ENCODE measurements at regions of chr3 and their contacts with region 1.

Region 1: GRCh38 chr3:52001443-52001974 is 5.8 kb upstream of the RPL29 start:
- DNase-seq: peak; percentile 79
- H3K4me3 ChIP-seq: no peak overlapping the region
- H3K27ac ChIP-seq: no peak overlapping the region
- H3K4me1 ChIP-seq: peaks cover 0 to 15% (median 6%) of the 10 kb centered on the region in 4 donors
- H3K27me3 ChIP-seq: peaks cover 4% of the 10 kb centered on the region
- CTCF ChIP-seq: peak; percentile 87 to 96 (median 90)
- EP300 ChIP-seq: no peak
- POLR2A ChIP-seq: no peak

Region 2: DNA sequence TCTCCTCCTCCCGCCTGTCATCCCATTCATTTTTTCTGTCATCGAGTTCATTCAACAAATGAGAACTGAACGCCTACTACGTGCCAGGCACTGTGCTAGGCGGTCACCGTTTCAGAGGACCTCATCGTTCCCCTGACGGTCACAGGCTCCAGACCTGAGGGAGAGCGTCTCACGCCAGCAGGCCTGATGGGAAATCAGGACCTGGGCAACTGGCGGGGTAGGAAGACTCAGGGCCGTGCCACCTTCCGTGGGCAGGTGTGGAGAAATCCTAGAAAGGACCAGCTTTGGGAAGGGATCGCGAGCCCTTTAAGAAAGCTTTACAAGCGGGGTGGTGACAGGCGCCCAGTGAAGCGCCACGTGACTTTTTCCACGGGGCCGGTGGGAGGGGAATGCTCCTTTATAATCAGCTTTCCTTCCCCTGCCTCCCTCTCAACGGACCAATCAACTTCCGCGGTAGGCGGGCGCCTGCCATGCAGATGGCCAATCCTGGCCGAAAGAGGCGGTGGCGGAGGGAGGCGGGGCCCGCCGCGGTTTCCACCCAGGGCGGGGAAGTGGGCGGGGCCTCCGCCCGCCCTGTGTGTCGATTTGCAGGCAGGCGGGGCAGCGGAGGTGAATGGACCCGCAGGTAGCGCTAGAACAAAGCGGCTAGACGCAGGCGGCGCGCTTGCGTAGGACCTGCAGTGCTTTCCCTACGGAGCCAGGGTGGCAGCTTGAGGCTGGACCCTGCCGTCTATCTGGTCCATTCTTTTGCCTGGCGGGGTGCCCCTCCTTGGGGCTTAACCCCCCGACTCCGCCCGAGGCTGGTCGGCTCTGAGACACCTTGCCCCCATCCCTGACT is 55.7 kb after region 1 on chr3:
- in situ Hi-C with region 1: loop called in 1 of 4 experiments (anchors 10 kb)
- intact Hi-C with region 1: loop called (anchors 10 kb)
- DNase-seq: peak; percentile 100
- H3K4me3 ChIP-seq: peak overlapping the region; percentile 54 to 80 (median 76)
- H3K27ac ChIP-seq: peak overlapping the region; percentile 88 to 96 (median 92)
- H3K4me1 ChIP-seq: peaks cover 17 to 50% (median 40%) of the 10 kb centered on the region in 4 donors
- H3K27me3 ChIP-seq: no peaks in the 10 kb centered on the region
- CTCF ChIP-seq: peak in 1 of 5 experiments; percentile 24
- EP300 ChIP-seq: no peak
- POLR2A ChIP-seq: peak; percentile 36

Region 3: DNA sequence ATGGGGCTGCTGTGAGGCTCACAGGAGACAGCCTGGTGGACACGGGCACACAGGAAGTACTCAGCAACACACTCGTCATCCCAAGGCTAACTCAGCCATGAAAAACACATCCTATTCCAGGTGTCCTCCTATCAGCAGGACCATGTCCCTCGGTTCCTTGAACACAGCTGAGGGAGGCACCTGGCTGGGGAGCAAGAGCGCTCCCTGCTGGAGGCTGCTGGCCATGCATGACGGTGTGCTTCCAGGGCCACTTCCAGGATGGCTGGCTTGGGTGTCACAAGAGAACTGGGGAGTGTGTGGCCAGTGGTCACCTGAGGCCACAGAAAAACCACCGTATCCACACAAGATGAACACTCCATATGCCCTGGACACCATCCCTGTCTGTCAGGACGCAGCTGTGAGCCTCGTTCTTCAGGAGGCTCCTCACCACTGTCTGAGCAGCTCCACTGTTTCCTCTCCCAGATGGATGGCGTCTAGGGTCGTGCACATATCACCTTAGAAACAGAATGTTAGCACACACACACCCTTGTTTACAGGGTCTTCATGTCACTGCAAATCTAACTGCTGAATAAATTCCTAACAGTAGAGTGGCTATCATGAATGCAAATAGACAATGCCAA is 121.7 kb after region 1 on chr3:
- in situ Hi-C with region 1: loop called in 1 of 4 experiments (anchors 5 kb)
- intact Hi-C with region 1: loop called (anchors 2 kb)
- DNase-seq: peak; percentile 82
- H3K4me3 ChIP-seq: no peak overlapping the region
- H3K27ac ChIP-seq: no peak overlapping the region
- H3K4me1 ChIP-seq: peaks cover 0 to 8% (median 1%) of the 10 kb centered on the region in 4 donors
- H3K27me3 ChIP-seq: no peaks in the 10 kb centered on the region
- CTCF ChIP-seq: peak; percentile 89 to 94 (median 92)
- EP300 ChIP-seq: no peak
- POLR2A ChIP-seq: no peak

Region 4: GRCh38 chr3:52144034-52144795 is 142.7 kb after region 1 on chr3:
- in situ Hi-C with region 1: loop called in 3 of 4 experiments (anchors 5 kb)
- intact Hi-C with region 1: loop called (anchors 5 kb)
- DNase-seq: peak; percentile 87
- H3K4me3 ChIP-seq: no peak overlapping the region
- H3K27ac ChIP-seq: no peak overlapping the region
- H3K4me1 ChIP-seq: peaks cover 0 to 3% (median 2%) of the 10 kb centered on the region in 4 donors
- H3K27me3 ChIP-seq: no peaks in the 10 kb centered on the region
- CTCF ChIP-seq: peak; percentile 95 to 98 (median 97)
- EP300 ChIP-seq: no peak
- POLR2A ChIP-seq: no peak

Measured in transverse colon (tissue), 4 donors.